Mammary epithelial cell (primary cell): ENCODE measurements at regions of chr20 and their contacts with region 1.

Region 1: GRCh38 chr20:36064658-36065426 is 89.7 kb upstream of the EPB41L1 start:
- DNase-seq: peak; percentile 85
- H3K4me3 ChIP-seq: peak overlapping the region; percentile 59 to 80 (median 65)
- H3K27ac ChIP-seq: peak overlapping the region; percentile 73
- H3K4me1 ChIP-seq: peaks cover 36% of the 10 kb centered on the region
- H3K27me3 ChIP-seq: no peaks in the 10 kb centered on the region
- CTCF ChIP-seq: no peak

Region 2: DNA sequence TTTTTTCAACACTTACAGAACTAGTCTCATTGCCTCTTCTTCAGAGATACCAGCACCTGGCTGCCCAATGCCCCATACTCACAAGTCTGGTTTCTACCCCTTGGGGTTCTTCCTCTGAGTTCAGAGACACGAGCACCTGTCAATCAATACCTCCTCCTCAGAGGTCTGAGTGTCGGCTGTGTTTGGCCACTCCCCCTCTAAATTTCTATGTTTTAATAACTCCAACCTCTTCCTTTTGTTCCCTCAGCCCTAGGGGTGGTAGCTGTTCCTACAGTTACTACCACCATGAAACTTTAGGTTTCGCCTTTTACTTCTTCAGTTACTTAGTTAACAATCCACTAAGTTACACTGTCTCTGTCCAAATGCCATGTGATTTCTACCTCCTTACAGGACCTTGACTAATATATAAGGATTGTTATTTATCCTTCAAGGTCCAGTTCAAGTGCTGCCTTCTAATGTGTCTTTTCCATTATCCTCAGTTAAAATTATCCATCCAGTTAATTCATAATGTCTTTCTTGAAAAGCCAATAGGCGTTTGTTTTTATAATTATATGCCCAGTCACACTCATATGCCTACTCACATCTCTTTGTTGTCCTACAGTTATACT is 307.6 kb before region 1 on chr20:
- CTCF ChIA-PET with region 1: no interaction called
- dilution Hi-C with region 1: no loop called
- in situ Hi-C with region 1: no loop called
- intact Hi-C with region 1: no loop called
- DNase-seq: no peak
- H3K4me3 ChIP-seq: no peak overlapping the region
- H3K27ac ChIP-seq: no peak overlapping the region
- H3K4me1 ChIP-seq: peaks cover 3% of the 10 kb centered on the region
- H3K27me3 ChIP-seq: no peaks in the 10 kb centered on the region
- CTCF ChIP-seq: no peak

Region 3: GRCh38 chr20:36035745-36036144 is 29.1 kb before region 1 on chr20:
- CTCF ChIA-PET with region 1: no interaction called
- dilution Hi-C with region 1: no loop called
- in situ Hi-C with region 1: no loop called
- intact Hi-C with region 1: loop called (anchors 2 kb)
- DNase-seq: peak; percentile 95
- H3K4me3 ChIP-seq: no peak overlapping the region
- H3K27ac ChIP-seq: no peak overlapping the region
- H3K4me1 ChIP-seq: peaks cover 17% of the 10 kb centered on the region
- H3K27me3 ChIP-seq: no peaks in the 10 kb centered on the region
- CTCF ChIP-seq: no peak